ENCODE measurements at regions of chr16 and their contacts with region 1.

Region 1: GRCh38 chr16:2429034-2429770 is at the start of gene CCNF:
- DNase-seq: peak; percentile 96 to 99 (median 97)
- H3K4me3 ChIP-seq: peak within 1 kb of the TSS; percentile 67 to 98 (median 89)
- H3K27ac ChIP-seq: peak within 1 kb of the TSS in 51 of 59 donors; percentile 6 to 88 (median 72)
- H3K27me3 ChIP-seq: no peaks in the 10 kb centered on the region
- CTCF ChIP-seq: peak in 30 of 56 donors; percentile 8 to 65 (median 26)
- total RNA-seq, gene CCNF: 3.8 to 15.4 (median 8.3) TPM

Region 2: DNA sequence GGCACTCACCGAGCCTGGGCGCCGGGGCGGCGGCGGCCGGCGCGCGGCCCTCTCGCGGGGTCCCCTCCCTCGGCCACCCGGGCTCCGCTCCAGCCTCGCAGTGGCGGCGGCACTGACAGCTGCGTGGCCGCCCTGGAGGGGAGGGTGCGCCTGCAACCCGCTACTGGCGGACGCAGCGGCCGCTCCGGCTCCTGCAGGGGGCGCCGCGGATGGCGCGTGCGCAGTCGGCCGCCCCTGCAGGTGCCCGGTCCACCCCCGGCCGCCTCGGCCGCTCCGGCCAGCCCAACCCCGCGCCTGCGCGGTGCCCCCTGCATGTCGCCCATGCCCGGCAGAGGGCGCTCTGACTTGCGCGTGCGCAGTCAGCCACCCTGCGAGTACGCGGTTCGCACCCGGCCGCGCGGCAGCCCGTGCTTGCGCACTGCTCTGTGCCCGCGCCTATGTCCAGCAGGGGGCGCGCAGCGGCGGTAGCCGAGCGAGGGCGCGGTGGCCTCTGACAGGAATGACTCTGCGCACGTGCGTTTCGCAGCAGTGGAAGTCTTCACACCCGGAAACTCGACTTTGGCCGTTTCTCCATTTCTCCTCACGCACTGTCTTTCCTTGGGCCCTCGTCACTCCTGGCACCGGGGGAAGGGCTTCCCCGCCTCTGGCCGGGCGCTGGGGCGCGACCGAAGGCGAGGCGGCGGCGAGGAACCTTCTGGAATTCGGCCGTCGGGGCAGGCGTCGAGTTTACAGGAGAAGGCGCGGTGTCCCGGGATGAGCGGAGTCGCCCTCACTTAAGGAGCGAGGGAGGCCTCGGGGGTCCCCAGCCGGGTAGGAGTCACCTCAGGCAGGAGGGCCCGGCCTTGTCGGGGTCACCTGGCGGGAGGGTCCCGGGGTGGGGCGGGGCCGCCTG is 88.4 kb before region 1 on chr16 and contains the start of gene ABCA3:
- intact Hi-C with region 1: loop called (anchors 1 to 2 kb)
- DNase-seq: peak; percentile 82 to 97 (median 90)
- H3K4me3 ChIP-seq: peak within 1 kb of the TSS; percentile 68 to 97 (median 87)
- H3K27ac ChIP-seq: peak within 1 kb of the TSS; percentile 44 to 97 (median 92)
- H3K27me3 ChIP-seq: no peaks in the 10 kb centered on the region
- CTCF ChIP-seq: peak; percentile 94 to 100 (median 100)
- total RNA-seq, gene ABCA3: 75.2 to 141 (median 103) TPM

Region 3: DNA sequence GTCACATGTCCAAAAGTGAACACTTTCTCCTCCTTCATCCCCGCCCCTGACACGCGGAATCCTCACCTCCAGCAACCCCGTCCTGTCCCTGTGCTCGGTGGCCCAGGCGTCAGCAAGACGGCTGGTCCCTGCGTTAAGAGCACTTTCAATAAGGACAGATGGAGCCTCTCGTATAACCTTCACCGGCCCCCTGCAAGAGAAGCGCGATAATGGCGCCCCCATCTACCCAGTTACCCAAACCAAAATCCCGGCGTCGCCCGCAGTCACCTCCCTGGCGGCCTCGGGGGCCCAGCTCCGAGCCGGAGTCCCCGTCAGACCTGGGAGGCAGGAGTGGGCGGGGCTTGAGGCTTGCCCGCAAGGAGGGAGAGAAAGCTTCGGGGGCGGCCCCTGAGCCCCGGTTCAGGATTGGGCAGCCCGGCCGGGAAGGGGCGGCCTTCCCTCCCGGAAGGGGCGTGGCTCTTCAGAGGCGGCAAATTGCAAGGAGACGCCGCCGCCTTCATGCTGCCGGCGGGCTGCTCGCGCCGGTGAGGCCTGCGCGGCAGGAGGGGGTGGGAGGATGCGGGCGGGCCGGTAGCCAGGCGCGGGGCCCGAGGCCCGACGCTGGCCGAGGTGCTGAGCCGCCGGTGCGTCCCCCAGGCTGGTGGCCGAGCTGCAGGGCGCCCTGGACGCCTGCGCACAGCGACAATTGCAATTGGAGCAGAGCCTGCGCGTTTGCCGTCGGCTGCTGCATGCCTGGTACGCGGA is 30.6 kb after region 1 on chr16 and contains the start of gene TEDC2:
- intact Hi-C with region 1: loop called in 1 of 2 experiments (anchors 5 kb)
- DNase-seq: peak; percentile 85 to 98 (median 96)
- H3K4me3 ChIP-seq: peak within 1 kb of the TSS; percentile 53 to 94 (median 75)
- H3K27ac ChIP-seq: peak within 1 kb of the TSS in 18 of 59 donors; percentile 3 to 77 (median 49)
- H3K27me3 ChIP-seq: no peaks in the 10 kb centered on the region
- CTCF ChIP-seq: peak in 17 of 56 donors; percentile 6 to 53 (median 19)
- total RNA-seq, gene TEDC2: 1.9 to 10.8 (median 5.0) TPM

Region 4: GRCh38 chr16:2474877-2475412 is 45.7 kb after region 1 on chr16 and contains the start of gene TBC1D24:
- intact Hi-C with region 1: loop called in 1 of 2 experiments (anchors 5 kb)
- DNase-seq: peak; percentile 72 to 93 (median 84)
- H3K4me3 ChIP-seq: peak within 1 kb of the TSS; percentile 64 to 96 (median 82)
- H3K27ac ChIP-seq: peak within 1 kb of the TSS in 56 of 59 donors; percentile 5 to 95 (median 84)
- H3K27me3 ChIP-seq: peaks cover 0 to 24% (median 2%) of the 10 kb centered on the region in 45 donors
- CTCF ChIP-seq: peak in 4 of 56 donors; percentile 3 to 25 (median 13)
- total RNA-seq, gene TBC1D24: 27.5 to 97.0 (median 62.6) TPM

Region 5: GRCh38 chr16:2500918-2501750 is 71.9 kb after region 1 on chr16:
- intact Hi-C with region 1: loop called (anchors 5 kb)
- DNase-seq: peak; percentile 84 to 94 (median 88)
- H3K4me3 ChIP-seq: peak overlapping the region in 55 of 59 donors; percentile 7 to 63 (median 42)
- H3K27ac ChIP-seq: peak overlapping the region in 58 of 59 donors; percentile 21 to 93 (median 82)
- H3K27me3 ChIP-seq: no peaks in the 10 kb centered on the region
- CTCF ChIP-seq: peak; percentile 90 to 100 (median 99)